ENCODE measurements at regions of chr5 and their contacts with region 1.

Region 1: DNA sequence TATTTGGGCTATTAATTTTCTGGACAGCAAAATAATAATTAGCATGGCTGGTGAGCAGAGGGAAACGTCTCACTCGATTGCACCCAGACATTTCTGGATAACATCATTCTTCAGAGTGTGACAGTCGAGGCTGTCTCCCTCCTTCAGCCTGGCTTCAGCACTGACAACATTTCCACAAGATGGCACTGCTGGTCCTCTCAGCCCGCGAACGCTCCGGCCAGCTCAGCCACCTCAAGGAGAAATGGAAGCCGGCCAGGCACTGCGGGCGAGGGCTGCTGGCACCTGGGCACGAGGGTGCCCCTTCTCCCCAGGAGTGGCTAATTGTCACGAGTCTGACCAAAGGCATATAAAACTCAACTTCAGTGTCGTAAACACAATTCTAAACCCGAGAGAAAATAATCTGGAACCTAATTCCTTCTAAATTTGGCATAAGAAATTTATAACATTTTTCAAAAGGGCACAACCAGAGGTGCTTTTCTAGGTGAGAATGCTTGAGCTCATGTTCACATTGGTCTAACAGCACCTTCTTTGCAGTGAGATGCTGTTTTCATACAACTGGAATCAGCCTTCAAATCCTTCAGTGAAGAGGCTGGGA is 65.9 kb downstream of the DAP start:
- H3K4me3 Mint-ChIP-seq: no peak overlapping the region
- H3K27ac Mint-ChIP-seq: peak overlapping the region; percentile 60
- H3K4me1 Mint-ChIP-seq: peaks cover 40% of the 10 kb centered on the region
- H3K27me3 Mint-ChIP-seq: no peaks in the 10 kb centered on the region

Region 2: DNA sequence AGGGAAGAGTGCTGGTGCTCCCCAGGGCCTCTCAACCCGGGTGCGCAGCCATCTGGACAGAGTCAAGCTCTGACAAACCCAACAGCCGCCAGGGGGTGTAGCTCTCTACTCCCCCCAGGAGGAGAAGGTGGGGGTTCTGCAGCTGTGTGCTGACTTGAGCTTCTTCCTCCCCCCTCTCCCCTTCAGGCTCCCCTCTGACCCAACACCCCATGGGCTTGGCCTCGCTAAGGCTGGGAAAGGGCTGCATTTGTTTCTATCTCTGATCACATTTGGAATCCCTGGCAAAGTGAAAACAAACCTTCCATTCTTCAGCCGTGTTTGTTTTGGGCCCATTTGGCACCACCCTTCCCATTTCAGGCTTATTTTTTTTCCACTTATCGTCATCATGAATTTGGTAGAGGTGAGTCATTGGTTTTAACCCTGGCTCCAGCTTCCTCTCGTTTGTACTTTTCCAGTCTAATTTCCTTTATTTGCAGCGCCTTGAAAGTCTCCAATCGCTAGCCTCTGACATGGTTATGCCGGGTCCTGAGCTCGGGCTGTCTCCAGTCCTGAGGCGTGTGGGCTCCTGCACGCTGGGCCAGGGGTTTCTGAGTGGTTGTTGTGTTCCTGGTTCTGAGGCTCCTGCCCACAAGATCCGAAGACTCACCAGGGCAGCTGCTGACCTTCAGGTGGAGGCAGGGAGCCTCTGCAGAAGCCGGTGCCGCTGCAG is 29.8 kb after region 1 on chr5:
- intact Hi-C with region 1: no loop called
- H3K4me3 Mint-ChIP-seq: no peak overlapping the region
- H3K27ac Mint-ChIP-seq: peak overlapping the region; percentile 59
- H3K4me1 Mint-ChIP-seq: peaks cover 77% of the 10 kb centered on the region
- H3K27me3 Mint-ChIP-seq: no peaks in the 10 kb centered on the region

Region 3: GRCh38 chr5:10964806-10965205 is 269.7 kb after region 1 on chr5:
- intact Hi-C with region 1: loop called (anchors 10 kb)
- H3K4me3 Mint-ChIP-seq: no peak overlapping the region
- H3K27ac Mint-ChIP-seq: no peak overlapping the region
- H3K4me1 Mint-ChIP-seq: peaks cover 8% of the 10 kb centered on the region
- H3K27me3 Mint-ChIP-seq: no peaks in the 10 kb centered on the region